Heart right ventricle (tissue), 16 donors: ENCODE measurements at regions of chr12 and their contacts with region 1.

Region 1: GRCh38 chr12:68610370-68611093 is at the start of gene RAP1B:
- DNase-seq: peak; percentile 90 to 91
- ATAC-seq: peak; percentile 96 to 99 (median 97)
- H3K4me3 ChIP-seq: peak within 1 kb of the TSS; percentile 54 to 91 (median 78)
- H3K27ac ChIP-seq: peak within 1 kb of the TSS; percentile 88 to 99 (median 96)
- H3K4me1 ChIP-seq: peaks cover 7 to 43% (median 35%) of the 10 kb centered on the region in 9 donors
- H3K27me3 ChIP-seq: no peaks in the 10 kb centered on the region
- CTCF ChIP-seq: peak in 1 of 9 donors; percentile 20
- total RNA-seq, gene RAP1B: 38.1 to 81.2 (median 42.0) TPM

Region 2: GRCh38 chr12:68223083-68223747 is 387.3 kb before region 1 on chr12:
- intact Hi-C with region 1: loop called in 1 of 10 experiments (anchors 10 kb)
- DNase-seq: peak; percentile 55 to 81
- ATAC-seq: peak; percentile 91 to 99 (median 98)
- H3K4me3 ChIP-seq: peak overlapping the region in 1 of 10 donors; percentile 13
- H3K27ac ChIP-seq: peak overlapping the region in 1 of 10 donors; percentile 15
- H3K4me1 ChIP-seq: peaks cover 0 to 18% (median 3%) of the 10 kb centered on the region in 9 donors
- H3K27me3 ChIP-seq: peaks cover 0 to 11% (median 0%) of the 10 kb centered on the region in 7 donors
- CTCF ChIP-seq: peak; percentile 73 to 90 (median 85)

Region 3: GRCh38 chr12:68358532-68359485 is 251.7 kb before region 1 on chr12:
- intact Hi-C with region 1: loop called in 8 of 10 experiments (anchors 2 to 10 kb)
- DNase-seq: peak in 1 of 2 donors; percentile 79
- ATAC-seq: peak; percentile 65 to 92 (median 87)
- H3K4me3 ChIP-seq: no peak overlapping the region
- H3K27ac ChIP-seq: peak overlapping the region in 1 of 10 donors; percentile 64
- H3K4me1 ChIP-seq: peaks cover 0 to 31% (median 13%) of the 10 kb centered on the region in 9 donors
- H3K27me3 ChIP-seq: no peaks in the 10 kb centered on the region
- CTCF ChIP-seq: peak; percentile 56 to 78 (median 74)

Region 4: DNA sequence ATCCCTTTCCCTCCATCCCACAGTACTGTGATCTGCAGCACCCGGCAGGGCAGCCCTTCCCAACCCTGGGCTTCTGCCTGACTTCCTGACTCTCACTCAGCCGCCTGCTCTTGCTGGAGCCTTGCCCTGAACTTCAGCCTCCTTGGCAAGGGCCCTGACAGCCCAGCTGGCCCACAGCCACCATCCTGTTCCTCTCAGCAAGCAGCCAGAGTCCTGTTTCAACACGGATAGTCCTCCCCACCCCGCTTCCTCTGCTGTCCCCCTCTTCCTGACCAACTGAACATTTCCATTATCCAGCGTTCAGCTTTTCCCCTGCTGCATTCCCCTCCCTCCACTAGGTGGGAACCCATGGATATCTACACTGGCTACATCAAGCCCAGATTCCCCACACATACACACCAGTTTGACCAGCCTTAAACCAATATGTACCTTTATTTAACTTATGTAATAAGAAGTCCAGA is 204.4 kb before region 1 on chr12:
- intact Hi-C with region 1: loop called in 3 of 10 experiments (anchors 5 kb)
- DNase-seq: peak; percentile 93 to 95
- ATAC-seq: peak; percentile 96 to 99 (median 98)
- H3K4me3 ChIP-seq: peak overlapping the region in 1 of 10 donors; percentile 25
- H3K27ac ChIP-seq: peak overlapping the region in 9 of 10 donors; percentile 63 to 84 (median 70)
- H3K4me1 ChIP-seq: peaks cover 6 to 36% (median 28%) of the 10 kb centered on the region in 9 donors
- H3K27me3 ChIP-seq: no peaks in the 10 kb centered on the region
- CTCF ChIP-seq: peak in 8 of 9 donors; percentile 14 to 62 (median 48)

Region 5: DNA sequence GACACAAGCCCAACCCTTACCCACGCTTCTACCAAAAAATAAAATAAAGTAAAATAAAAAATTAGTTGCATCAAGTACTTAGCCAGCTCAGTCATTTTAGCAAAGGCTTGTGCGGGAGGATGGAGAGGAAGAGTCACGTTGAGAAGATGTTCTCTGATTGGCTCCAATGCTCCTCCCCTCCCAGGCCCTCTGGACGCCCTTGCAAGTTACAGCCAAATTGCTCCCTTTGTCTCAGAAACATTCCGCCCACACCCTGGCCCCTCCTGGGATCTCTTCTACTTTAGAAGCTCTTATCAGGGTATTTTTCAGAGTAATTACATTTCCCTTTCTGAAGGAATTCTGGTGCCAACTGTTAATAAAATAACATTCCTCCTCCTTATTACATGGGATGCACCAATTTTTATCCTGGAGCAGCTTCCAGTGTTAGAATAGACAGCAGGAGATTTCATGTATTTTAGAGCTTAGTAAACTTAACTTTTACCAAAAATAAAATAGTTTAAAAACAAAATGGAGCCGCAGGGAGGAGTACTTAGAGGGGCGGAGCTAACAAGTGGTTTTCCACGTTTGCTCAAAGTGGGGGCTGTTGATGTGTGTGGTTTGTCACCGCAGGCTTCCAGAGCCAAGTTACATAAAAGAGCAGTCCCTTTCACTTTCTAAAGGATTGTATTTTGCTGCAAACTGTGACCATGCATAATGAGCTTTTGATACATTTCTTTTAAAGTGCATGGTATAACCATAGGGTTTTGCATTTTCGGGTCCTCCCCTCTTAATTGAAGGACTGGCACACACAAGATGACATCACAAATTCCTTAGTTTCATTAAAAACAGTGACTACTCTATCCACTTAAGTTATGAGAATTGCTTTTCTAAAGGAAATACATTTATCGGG is 71.6 kb before region 1 on chr12:
- intact Hi-C with region 1: loop called in 1 of 10 experiments (anchors 10 kb)
- DNase-seq: peak; percentile 59 to 83
- ATAC-seq: peak; percentile 84 to 98 (median 95)
- H3K4me3 ChIP-seq: peak overlapping the region in 9 of 10 donors; percentile 1 to 45 (median 31)
- H3K27ac ChIP-seq: peak overlapping the region; percentile 60 to 87 (median 75)
- H3K4me1 ChIP-seq: peaks cover 0 to 25% (median 9%) of the 10 kb centered on the region in 9 donors
- H3K27me3 ChIP-seq: no peaks in the 10 kb centered on the region
- CTCF ChIP-seq: no peak

Region 6: GRCh38 chr12:68686595-68687521 is 76.3 kb after region 1 on chr12 and contains the start of gene NUP107:
- intact Hi-C with region 1: loop called in 7 of 10 experiments (anchors 2 to 10 kb)
- DNase-seq: peak; percentile 98 to 99
- ATAC-seq: peak; percentile 98 to 100 (median 99)
- H3K4me3 ChIP-seq: peak within 1 kb of the TSS; percentile 63 to 96 (median 83)
- H3K27ac ChIP-seq: peak within 1 kb of the TSS; percentile 10 to 86 (median 78)
- H3K4me1 ChIP-seq: peaks cover 0 to 28% (median 13%) of the 10 kb centered on the region in 9 donors
- H3K27me3 ChIP-seq: no peaks in the 10 kb centered on the region
- CTCF ChIP-seq: peak in 6 of 9 donors; percentile 8 to 30 (median 19)
- total RNA-seq, gene NUP107: 21.0 to 25.7 (median 22.2) TPM